IMR-90 (cell line): ENCODE measurements at regions of chr16 and their contacts with region 1.

Region 1: GRCh38 chr16:2919511-2920255 is 8.0 kb downstream of the FLYWCH1 start:
- DNase-seq: peak; percentile 74
- ATAC-seq: peak; percentile 86
- H3K4me3 ChIP-seq: no peak overlapping the region
- H3K27ac ChIP-seq: no peak overlapping the region
- H3K4me1 ChIP-seq: peaks cover 5% of the 10 kb centered on the region
- H3K27me3 ChIP-seq: no peaks in the 10 kb centered on the region
- CTCF ChIP-seq: peak; percentile 91
- POLR2A ChIP-seq: no peak
- RAD21 ChIP-seq: peak; percentile 86

Region 2: DNA sequence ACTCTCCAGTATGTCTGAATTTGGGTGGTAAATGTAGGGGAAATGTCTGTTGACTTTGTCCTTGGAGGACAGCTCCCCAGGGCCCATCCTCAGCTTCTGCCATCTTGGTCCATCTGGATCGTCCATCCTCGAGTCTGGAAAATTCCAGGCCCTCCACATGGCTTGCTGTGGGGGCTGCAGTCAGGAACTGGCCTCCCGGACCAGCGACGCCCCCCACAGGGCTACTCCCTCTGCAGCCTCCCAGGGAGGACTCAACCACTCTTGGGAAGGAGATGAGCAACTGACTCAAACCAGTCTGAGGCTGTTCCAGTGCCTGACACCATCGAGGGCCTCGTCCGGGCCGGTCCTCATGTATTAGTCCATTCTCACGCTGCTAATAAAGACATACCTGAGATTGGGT is 95.1 kb before region 1 on chr16:
- CTCF ChIA-PET with region 1: no interaction called
- POLR2A ChIA-PET with region 1: no interaction called
- dilution Hi-C with region 1: no loop called
- in situ Hi-C with region 1: no loop called
- intact Hi-C with region 1: no loop called
- DNase-seq: no peak
- ATAC-seq: no peak
- H3K4me3 ChIP-seq: no peak overlapping the region
- H3K27ac ChIP-seq: no peak overlapping the region
- H3K4me1 ChIP-seq: no peaks in the 10 kb centered on the region
- H3K27me3 ChIP-seq: peaks cover 52% of the 10 kb centered on the region
- CTCF ChIP-seq: no peak
- POLR2A ChIP-seq: no peak
- RAD21 ChIP-seq: no peak

Region 3: GRCh38 chr16:2874912-2875362 is 44.7 kb before region 1 on chr16:
- CTCF ChIA-PET with region 1: no interaction called
- POLR2A ChIA-PET with region 1: no interaction called
- dilution Hi-C with region 1: no loop called
- in situ Hi-C with region 1: loop called (anchors 5 kb)
- intact Hi-C with region 1: loop called (anchors 1 kb)
- DNase-seq: peak; percentile 61
- ATAC-seq: peak; percentile 100
- H3K4me3 ChIP-seq: no peak overlapping the region
- H3K27ac ChIP-seq: no peak overlapping the region
- H3K4me1 ChIP-seq: no peaks in the 10 kb centered on the region
- H3K27me3 ChIP-seq: no peaks in the 10 kb centered on the region
- CTCF ChIP-seq: peak; percentile 97
- POLR2A ChIP-seq: no peak
- RAD21 ChIP-seq: peak; percentile 74

Region 4: GRCh38 chr16:2883027-2883851 is 36.4 kb before region 1 on chr16 and contains the start of gene FLYWCH2:
- CTCF ChIA-PET with region 1: no interaction called
- POLR2A ChIA-PET with region 1: interaction called, 21 read pairs
- dilution Hi-C with region 1: no loop called
- in situ Hi-C with region 1: loop called (anchors 5 kb)
- intact Hi-C with region 1: no loop called
- DNase-seq: peak; percentile 93
- ATAC-seq: peak; percentile 84
- H3K4me3 ChIP-seq: peak within 1 kb of the TSS; percentile 49
- H3K27ac ChIP-seq: peak within 1 kb of the TSS; percentile 83
- H3K4me1 ChIP-seq: peaks cover 4% of the 10 kb centered on the region
- H3K27me3 ChIP-seq: no peaks in the 10 kb centered on the region
- CTCF ChIP-seq: no peak
- POLR2A ChIP-seq: peak; percentile 52
- RAD21 ChIP-seq: no peak
- total RNA-seq, gene FLYWCH2: 42.3 and 48.9 TPM in 2 replicates